ENCODE measurements at regions of chr19 and their contacts with region 1.

Region 1: DNA sequence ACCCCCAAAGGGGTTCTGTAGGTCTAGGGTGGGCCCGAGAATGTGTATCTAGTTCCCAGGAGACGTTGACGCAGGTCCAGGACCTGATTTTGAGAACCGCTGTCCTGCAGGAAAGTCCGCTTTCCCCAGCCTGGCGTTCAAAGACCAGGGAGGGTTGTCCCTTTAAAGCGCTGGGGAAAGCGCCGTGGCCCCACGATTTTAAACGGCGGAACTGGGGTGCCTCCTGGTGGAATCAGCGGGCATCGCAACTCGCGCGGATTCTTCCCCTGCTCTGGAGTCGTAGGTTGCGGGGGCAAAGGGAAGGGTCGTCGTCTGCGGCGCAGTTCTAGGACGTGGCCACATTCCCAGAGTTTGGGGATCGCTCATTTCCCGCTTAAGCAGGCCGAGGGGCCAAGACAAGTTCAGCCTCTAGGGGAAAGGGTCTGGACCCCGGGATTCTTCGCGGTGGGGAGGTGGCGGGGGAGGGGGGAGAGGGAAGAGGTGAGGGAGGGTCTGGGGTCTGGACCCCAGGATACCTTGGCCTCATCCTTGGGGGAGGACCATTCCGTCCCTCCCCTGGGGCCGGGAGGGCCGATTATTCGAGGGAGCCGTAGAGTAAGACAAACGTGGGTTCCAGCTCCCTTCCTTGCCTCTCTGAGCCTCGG is 7.7 kb downstream of the PNMA8B start:
- DNase-seq: peak; percentile 70 to 97 (median 86)

Region 2: GRCh38 chr19:46392243-46392801 is 95.6 kb before region 1 on chr19:
- intact Hi-C with region 1: loop called (anchors 1 kb)
- DNase-seq: peak in 3 of 10 donors; percentile 69 to 83 (median 82)

Region 3: DNA sequence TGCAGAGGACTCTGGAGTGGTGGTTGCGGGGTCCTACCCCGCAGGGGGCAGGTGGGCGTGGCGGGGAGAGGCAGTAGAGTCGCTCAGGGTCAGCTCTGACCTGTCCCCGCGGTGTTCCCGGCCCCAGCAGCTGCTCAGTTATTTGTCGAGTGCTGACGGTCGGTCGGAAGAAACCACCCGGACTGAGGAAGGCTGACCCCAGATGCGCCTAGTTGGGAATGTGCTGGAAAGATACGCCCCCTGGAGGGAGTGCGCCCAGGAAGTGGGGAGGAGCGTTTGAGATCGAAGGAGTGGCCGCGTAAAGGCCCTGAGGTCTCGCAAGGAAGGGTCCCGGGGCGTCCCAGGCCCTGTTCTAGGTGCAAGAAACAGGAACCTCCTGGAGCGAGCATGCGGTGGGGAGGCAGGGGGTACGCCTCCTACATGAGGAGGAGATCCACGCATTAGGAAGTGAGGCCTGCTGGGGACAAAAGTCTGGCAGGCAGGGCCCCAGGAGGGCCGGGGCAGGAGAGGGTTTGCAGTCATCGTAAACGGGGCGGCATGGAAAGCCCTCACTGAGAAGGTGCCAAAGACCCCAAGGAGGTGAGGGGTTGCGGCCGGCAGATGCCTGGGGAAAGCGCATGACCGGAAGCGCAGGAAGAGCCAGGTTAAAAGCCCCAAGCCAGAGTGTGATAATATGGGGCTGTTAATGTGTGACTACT is 83.7 kb before region 1 on chr19:
- intact Hi-C with region 1: loop called (anchors 2 kb)
- DNase-seq: peak in 4 of 10 donors; percentile 17 to 86 (median 78)

Region 4: GRCh38 chr19:46513461-46514236 is 25.7 kb after region 1 on chr19:
- intact Hi-C with region 1: loop called (anchors 1 kb)
- DNase-seq: peak; percentile 72 to 98 (median 88)

Region 5: GRCh38 chr19:46579361-46579879 is 91.5 kb after region 1 on chr19:
- intact Hi-C with region 1: no loop called
- DNase-seq: peak in 5 of 10 donors; percentile 29 to 89 (median 39)